Endothelial cell of umbilical vein (primary cell): ENCODE measurements at regions of chr3 and their contacts with region 1.

Region 1: DNA sequence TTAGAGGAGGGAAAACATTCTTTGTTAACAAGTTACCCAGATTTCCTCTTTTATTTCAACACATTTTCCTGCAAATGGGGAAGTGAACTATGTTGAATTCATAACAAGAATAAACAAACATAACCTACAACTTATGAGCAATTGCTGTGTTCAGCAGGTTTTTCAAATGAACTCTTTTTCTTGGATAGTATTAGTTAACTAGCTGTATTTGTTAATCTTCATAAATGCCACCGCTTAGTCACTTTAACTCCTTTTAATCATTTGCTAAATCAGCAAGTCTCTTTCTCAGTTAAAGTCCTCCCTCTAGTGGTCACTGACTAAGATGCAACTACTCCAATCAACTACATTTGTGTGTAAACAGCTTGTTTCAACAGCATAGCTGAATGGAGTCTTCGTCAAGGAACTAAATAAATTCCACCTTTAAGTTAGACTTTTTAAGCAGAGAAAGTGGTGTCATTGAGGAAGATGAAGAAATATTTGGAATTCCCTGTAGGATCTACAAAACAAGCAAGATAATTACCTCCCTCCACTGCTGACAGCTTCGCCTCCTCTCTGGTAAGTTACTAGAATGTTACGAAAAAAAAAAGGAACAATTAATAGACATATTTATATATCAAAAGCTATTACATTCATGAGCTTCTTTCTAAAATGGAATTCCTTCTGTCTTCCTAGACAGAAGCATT is 1122.0 kb downstream of the ROBO1 start:
- DNase-seq: peak; percentile 84
- H3K4me3 ChIP-seq: no peak overlapping the region
- H3K27ac ChIP-seq: no peak overlapping the region
- H3K4me1 ChIP-seq: peaks cover 31% of the 10 kb centered on the region
- H3K27me3 ChIP-seq: no peaks in the 10 kb centered on the region
- CTCF ChIP-seq: peak; percentile 54 to 61
- POLR2A ChIP-seq: no peak

Region 2: DNA sequence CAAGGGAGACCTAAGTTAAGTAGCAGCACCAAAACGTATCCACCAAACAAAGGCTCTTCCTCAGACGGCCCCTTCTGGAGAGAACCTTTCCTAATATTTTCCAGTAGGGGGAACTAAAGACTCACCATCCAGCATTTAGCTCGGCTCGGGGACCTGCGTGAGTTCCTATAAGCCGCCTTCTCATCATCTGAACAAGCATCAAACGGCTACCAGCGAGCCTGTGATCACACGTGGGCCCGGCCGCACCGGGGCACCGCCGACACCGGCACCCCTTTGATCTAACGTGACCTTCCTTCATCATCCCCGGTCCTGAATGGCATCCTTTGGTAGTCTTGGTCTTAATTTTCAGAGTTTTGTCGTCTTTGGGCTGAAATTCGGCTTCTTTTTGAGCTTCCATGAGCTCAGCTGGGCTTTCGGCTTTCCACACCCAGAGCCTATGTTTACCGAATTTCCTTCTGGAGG is 1607.3 kb before region 1 on chr3:
- CTCF ChIA-PET with region 1: interaction called, 132 read pairs
- POLR2A ChIA-PET with region 1: no interaction called
- dilution Hi-C with region 1: no loop called
- intact Hi-C with region 1: loop called (anchors 1 kb)
- DNase-seq: peak; percentile 67
- H3K4me3 ChIP-seq: peak overlapping the region in 1 of 3 experiments; percentile 21
- H3K27ac ChIP-seq: no peak overlapping the region
- H3K4me1 ChIP-seq: peaks cover 11% of the 10 kb centered on the region
- H3K27me3 ChIP-seq: peaks cover 17 to 26% of the 10 kb centered on the region in 2 experiments
- CTCF ChIP-seq: peak; percentile 32 to 51
- POLR2A ChIP-seq: no peak

Region 3: GRCh38 chr3:77320514-77320913 is 1325.3 kb before region 1 on chr3:
- CTCF ChIA-PET with region 1: interaction called, 28 read pairs
- POLR2A ChIA-PET with region 1: no interaction called
- dilution Hi-C with region 1: no loop called
- intact Hi-C with region 1: loop called (anchors 1 kb)
- DNase-seq: peak; percentile 22
- H3K4me3 ChIP-seq: no peak overlapping the region
- H3K27ac ChIP-seq: no peak overlapping the region
- H3K4me1 ChIP-seq: no peaks in the 10 kb centered on the region
- H3K27me3 ChIP-seq: no peaks in the 10 kb centered on the region
- CTCF ChIP-seq: peak; percentile 38 to 39
- POLR2A ChIP-seq: no peak

Region 4: DNA sequence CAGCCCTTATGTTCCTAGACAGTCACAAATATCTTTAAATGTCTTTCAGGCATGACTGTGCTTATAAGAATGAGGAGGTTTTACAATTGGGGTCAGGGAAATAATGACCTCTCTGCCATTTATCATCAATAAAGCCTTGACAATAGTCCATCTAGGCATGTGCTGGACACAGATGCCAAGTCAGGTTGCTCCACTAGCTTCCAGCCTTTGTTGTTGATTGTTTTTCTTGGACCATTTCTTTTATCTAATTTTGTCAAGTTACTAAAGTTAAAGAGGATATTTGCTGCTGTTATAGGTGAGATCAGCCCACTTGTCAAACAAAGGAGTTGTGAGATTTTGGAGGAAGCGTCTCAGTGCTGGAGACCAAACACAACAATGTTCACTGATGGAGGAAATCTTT is 977.9 kb before region 1 on chr3:
- CTCF ChIA-PET with region 1: no interaction called
- POLR2A ChIA-PET with region 1: no interaction called
- dilution Hi-C with region 1: no loop called
- intact Hi-C with region 1: loop called (anchors 5 kb)
- DNase-seq: peak; percentile 35
- H3K4me3 ChIP-seq: no peak overlapping the region
- H3K27ac ChIP-seq: peak overlapping the region; percentile 39
- H3K4me1 ChIP-seq: peaks cover 14% of the 10 kb centered on the region
- H3K27me3 ChIP-seq: no peaks in the 10 kb centered on the region
- CTCF ChIP-seq: no peak
- POLR2A ChIP-seq: no peak

Region 5: GRCh38 chr3:78204977-78205376 is 440.8 kb before region 1 on chr3:
- CTCF ChIA-PET with region 1: interaction called, 15 read pairs
- POLR2A ChIA-PET with region 1: no interaction called
- dilution Hi-C with region 1: no loop called
- intact Hi-C with region 1: loop called (anchors 1 kb)
- DNase-seq: peak; percentile 65
- H3K4me3 ChIP-seq: no peak overlapping the region
- H3K27ac ChIP-seq: peak overlapping the region; percentile 10
- H3K4me1 ChIP-seq: peaks cover 4% of the 10 kb centered on the region
- H3K27me3 ChIP-seq: no peaks in the 10 kb centered on the region
- CTCF ChIP-seq: peak; percentile 9 to 37
- POLR2A ChIP-seq: no peak

Region 6: DNA sequence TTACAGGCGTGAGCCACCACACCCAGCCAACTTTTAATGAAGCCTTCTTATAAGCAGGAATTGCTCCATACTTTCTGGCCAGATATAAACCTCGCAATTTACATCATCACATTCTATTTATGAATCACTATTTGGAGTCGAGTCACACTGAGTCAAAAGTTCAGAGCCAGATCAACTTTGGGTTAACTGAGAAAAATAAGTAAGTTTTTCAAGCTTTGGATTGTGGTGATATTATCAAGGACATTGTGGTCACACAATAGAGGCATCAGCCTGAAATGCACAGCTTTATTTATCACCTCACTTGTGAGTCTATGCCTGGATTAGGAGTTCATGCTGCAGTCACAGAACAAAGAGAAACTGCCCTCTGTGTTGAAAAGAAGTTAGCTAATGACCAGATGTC is 41.4 kb before region 1 on chr3:
- CTCF ChIA-PET with region 1: no interaction called
- POLR2A ChIA-PET with region 1: no interaction called
- dilution Hi-C with region 1: no loop called
- intact Hi-C with region 1: no loop called
- DNase-seq: peak; percentile 17
- H3K4me3 ChIP-seq: no peak overlapping the region
- H3K27ac ChIP-seq: no peak overlapping the region
- H3K4me1 ChIP-seq: no peaks in the 10 kb centered on the region
- H3K27me3 ChIP-seq: no peaks in the 10 kb centered on the region
- CTCF ChIP-seq: no peak
- POLR2A ChIP-seq: no peak

Region 7: DNA sequence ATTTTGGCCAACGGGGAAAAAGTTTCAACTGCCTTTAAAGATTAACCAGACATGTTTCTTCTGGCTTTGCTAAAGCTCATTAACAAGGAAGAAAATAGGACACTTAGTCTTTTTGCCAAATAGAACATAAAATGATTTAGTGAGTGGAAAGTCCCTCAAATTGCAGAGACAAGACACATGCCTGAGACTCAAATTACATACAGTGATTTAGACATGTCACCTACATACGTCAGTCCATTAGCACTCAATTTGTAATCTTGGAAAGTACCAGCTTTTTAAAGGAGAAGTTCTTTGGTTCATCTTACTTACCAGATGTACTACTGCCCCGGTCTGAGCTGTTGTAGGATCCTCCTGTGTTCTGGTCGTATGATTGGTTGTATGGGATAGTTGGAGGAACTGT is 12.1 kb before region 1 on chr3:
- CTCF ChIA-PET with region 1: interaction called, 17 read pairs
- POLR2A ChIA-PET with region 1: no interaction called
- dilution Hi-C with region 1: no loop called
- intact Hi-C with region 1: no loop called
- DNase-seq: no peak
- H3K4me3 ChIP-seq: no peak overlapping the region
- H3K27ac ChIP-seq: no peak overlapping the region
- H3K4me1 ChIP-seq: no peaks in the 10 kb centered on the region
- H3K27me3 ChIP-seq: no peaks in the 10 kb centered on the region
- CTCF ChIP-seq: no peak
- POLR2A ChIP-seq: no peak

Region 8: GRCh38 chr3:78724859-78725258 is 79.1 kb after region 1 on chr3:
- CTCF ChIA-PET with region 1: no interaction called
- POLR2A ChIA-PET with region 1: no interaction called
- dilution Hi-C with region 1: no loop called
- intact Hi-C with region 1: no loop called
- DNase-seq: no peak
- H3K4me3 ChIP-seq: no peak overlapping the region
- H3K27ac ChIP-seq: no peak overlapping the region
- H3K4me1 ChIP-seq: no peaks in the 10 kb centered on the region
- H3K27me3 ChIP-seq: no peaks in the 10 kb centered on the region
- CTCF ChIP-seq: no peak
- POLR2A ChIP-seq: no peak